ENCODE measurements at regions of chr19 and their contacts with region 1.

Region 1: DNA sequence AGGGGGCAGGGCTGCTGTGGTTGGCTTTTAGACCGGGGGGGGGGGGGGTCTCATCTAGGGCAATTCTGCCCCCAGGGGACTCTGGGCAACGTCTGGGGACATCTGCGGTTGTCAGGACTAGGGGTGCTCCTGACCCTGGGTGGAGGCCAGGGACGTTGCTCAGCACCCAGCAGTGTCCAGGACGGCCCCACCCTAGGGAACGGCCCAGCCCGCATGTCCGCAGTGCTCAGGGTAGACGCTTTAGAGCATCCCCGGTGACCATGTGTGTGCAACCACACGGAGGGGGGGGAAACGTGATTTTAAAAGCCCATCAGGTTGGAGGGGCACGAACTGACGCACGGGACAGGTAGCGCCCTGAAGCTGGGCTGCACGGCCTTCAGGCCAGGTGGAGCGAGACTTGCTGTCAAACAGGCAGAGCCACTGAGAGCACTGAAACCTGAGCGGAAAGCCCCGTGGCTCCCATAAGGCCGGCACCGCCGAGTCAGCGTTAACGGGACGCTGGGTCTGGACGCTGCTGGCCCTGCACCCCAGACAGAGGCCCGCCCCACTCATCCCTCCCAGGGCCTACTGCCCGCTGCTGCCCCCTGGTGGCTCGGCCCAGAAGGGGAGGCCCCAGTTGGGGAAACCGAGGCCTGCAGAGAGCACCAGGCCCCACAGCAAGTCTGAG is 8.3 kb downstream of the CACTIN start:
- DNase-seq: peak; percentile 86 to 95
- ATAC-seq: peak; percentile 88
- H3K4me3 ChIP-seq: no peak overlapping the region
- H3K27ac ChIP-seq: no peak overlapping the region
- H3K4me1 ChIP-seq: no peaks in the 10 kb centered on the region
- H3K27me3 ChIP-seq: no peaks in the 10 kb centered on the region

Region 2: GRCh38 chr19:3304871-3305423 is 313.3 kb before region 1 on chr19:
- intact Hi-C with region 1: loop called in 1 of 2 experiments (anchors 10 kb)
- DNase-seq: peak; percentile 77 to 93
- ATAC-seq: peak; percentile 78
- H3K4me3 ChIP-seq: no peak overlapping the region
- H3K27ac ChIP-seq: no peak overlapping the region
- H3K4me1 ChIP-seq: no peaks in the 10 kb centered on the region
- H3K27me3 ChIP-seq: peaks cover 0 to 1% of the 10 kb centered on the region in 2 donors

Region 3: DNA sequence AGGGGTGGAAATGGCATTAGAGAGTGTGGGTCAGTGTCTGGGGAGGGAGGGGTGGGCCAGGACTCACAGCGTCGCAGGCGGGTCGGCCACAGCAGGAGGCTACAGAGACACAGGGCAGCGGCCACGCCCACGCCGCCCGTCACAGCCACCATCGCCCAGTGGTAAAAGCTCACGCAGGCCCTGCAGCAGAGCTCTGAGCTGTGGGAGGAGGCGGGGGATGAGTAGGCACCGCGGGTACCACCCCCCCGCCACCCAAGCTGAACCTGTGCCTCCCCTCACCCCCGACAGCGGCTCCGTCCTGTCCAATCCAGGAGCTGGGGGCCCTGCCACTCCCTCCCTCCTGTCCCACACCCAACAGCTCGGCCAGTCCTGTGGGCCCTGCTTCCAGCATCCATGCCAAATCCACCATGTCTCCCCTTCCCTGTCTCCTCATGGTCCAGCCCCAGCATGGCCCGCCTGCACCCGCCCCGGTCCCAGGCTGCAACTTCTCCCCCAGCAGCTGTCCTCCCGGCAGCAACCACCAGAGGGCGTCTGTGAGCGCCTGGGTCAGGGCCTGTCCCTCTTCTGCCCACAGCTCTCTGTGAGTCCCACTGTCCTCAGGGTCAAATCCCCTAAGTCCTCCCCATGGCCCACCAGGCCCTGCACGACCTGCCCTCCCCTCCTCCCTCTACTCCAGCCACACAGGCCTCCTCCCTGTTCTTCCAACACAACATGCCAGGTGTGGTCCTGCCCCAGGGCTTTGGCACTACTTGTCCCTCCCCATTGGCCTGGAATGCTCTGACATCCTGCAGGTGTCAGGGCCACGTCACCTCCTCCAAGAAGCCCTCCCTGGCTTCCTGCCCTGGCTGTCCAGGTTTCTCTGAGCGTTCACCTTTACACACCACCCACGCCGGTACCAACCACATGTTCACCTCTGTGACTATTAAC is 73.3 kb before region 1 on chr19:
- intact Hi-C with region 1: loop called (anchors 2 kb)
- DNase-seq: peak; percentile 81 to 95
- ATAC-seq: peak; percentile 76
- H3K4me3 ChIP-seq: no peak overlapping the region
- H3K27ac ChIP-seq: no peak overlapping the region
- H3K4me1 ChIP-seq: no peaks in the 10 kb centered on the region
- H3K27me3 ChIP-seq: no peaks in the 10 kb centered on the region

Region 4: GRCh38 chr19:3557461-3558248 is 60.6 kb before region 1 on chr19 and contains the start of gene MFSD12:
- intact Hi-C with region 1: no loop called
- DNase-seq: peak; percentile 97 to 98
- ATAC-seq: peak; percentile 99
- H3K4me3 ChIP-seq: peak within 1 kb of the TSS; percentile 83 to 91
- H3K27ac ChIP-seq: no peak within 1 kb of the TSS
- H3K4me1 ChIP-seq: no peaks in the 10 kb centered on the region
- H3K27me3 ChIP-seq: no peaks in the 10 kb centered on the region
- total RNA-seq, gene MFSD12: 40.7 to 47.7 TPM

Region 5: DNA sequence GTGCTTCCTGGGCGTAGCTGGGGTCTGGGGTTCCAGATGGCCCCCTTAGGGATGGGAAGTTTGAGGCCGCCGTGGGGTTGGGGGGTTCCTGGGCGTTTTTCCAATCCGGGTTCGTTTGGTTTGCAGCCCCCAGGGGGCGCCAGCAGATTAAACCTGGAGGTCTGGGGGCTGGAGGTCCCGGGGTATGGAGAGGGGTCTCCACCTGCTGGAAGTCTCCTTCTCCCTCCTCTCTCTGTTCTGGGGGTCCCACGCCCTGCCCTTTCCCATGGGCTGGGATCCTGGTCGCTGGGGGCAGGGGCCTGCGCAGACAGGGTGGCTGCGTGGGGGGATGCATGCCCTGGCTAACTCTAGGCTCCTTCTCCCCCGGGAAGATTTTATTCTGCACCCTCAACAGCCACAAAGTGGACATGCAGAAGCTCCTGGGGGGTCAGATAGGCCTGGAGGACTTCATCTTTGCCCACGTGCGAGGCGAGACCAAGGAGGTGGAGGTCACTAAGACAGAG is 32.1 kb before region 1 on chr19:
- intact Hi-C with region 1: loop called (anchors 2 kb)
- DNase-seq: no peak
- ATAC-seq: no peak
- H3K4me3 ChIP-seq: no peak overlapping the region
- H3K27ac ChIP-seq: no peak overlapping the region
- H3K4me1 ChIP-seq: no peaks in the 10 kb centered on the region
- H3K27me3 ChIP-seq: no peaks in the 10 kb centered on the region